H1 (cell line): ENCODE measurements at regions of chrX and their contacts with region 1.

Region 1: GRCh38 chrX:14029425-14030173 is at the start of gene GEMIN8:
- DNase-seq: peak; percentile 51 to 85
- H3K4me3 ChIP-seq: peak within 1 kb of the TSS; percentile 57 to 70 (median 66)
- H3K27ac ChIP-seq: peak within 1 kb of the TSS; percentile 83
- H3K4me1 ChIP-seq: peaks cover 0 to 8% (median 6%) of the 10 kb centered on the region in 4 experiments; a peak in 4 of 7 replicates
- H3K27me3 ChIP-seq: no peaks in the 10 kb centered on the region
- CTCF ChIP-seq: no peak
- EP300 ChIP-seq: no peak; a peak in 1 of 3 replicates
- POLR2A ChIP-seq: peak in 1 of 2 experiments; percentile 65; a peak in 2 of 3 replicates
- RAD21 ChIP-seq: no peak
- total RNA-seq, gene GEMIN8: 18.2 and 19.9 TPM in 2 replicates

Region 2: DNA sequence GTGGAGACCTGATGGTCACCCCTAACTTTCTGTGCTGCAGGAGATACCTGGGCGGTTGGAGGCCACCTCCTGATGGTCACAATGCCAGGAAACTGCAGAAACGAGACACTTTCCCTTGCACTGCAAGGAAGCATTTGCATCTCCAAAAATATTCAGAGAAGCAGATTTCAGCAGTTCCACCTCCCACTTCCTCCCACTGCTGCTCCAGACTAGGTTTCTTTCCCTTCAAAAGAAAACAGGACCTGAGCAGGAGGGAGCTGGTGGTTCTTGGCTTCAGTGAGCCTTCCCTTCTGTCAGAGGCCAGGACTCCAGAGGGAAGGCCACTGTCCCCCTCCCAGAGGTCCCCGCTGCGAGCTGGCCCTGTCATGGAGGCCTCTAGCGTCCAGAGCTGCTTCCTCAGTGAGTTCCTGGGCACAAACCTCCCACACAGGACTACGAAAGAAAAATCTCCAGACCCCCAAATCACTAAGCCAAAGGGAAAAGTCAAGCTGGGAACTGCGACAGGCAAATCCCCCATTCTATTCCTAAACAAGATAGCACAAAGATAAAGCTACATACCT is 248.7 kb before region 1 on chrX:
- CTCF ChIA-PET with region 1: interaction called, 4 read pairs
- POLR2A ChIA-PET with region 1: interaction called, 10 read pairs
- DNase-seq: no peak
- H3K4me3 ChIP-seq: no peak overlapping the region
- H3K27ac ChIP-seq: no peak overlapping the region
- H3K4me1 ChIP-seq: no peaks in the 10 kb centered on the region; a peak in 1 of 7 replicates
- H3K27me3 ChIP-seq: no peaks in the 10 kb centered on the region
- CTCF ChIP-seq: no peak
- EP300 ChIP-seq: no peak
- POLR2A ChIP-seq: no peak
- RAD21 ChIP-seq: no peak

Region 3: DNA sequence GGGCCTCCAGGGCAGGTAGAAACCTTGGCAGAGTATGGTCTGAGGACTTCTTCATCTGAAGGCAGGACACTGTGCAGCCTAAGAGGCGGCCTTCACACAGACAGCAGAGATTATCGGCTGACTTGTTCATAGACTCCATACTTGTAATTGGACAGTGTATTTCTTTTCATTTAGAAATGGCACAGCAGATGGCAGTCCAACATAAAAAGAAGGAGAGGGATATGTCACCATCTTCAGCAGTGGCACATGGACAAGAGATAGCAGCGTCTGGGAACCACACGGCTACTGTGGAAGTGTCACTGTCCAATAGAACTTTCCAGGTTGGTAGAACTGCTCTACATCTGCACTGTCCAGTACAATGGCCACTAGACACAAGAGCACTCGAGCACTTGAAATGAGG is 21.8 kb after region 1 on chrX:
- CTCF ChIA-PET with region 1: no interaction called
- POLR2A ChIA-PET with region 1: no interaction called
- DNase-seq: no peak
- H3K4me3 ChIP-seq: no peak overlapping the region
- H3K27ac ChIP-seq: no peak overlapping the region
- H3K4me1 ChIP-seq: no peaks in the 10 kb centered on the region
- H3K27me3 ChIP-seq: no peaks in the 10 kb centered on the region
- CTCF ChIP-seq: no peak
- EP300 ChIP-seq: no peak
- POLR2A ChIP-seq: no peak
- RAD21 ChIP-seq: no peak

Region 4: GRCh38 chrX:14235004-14235403 is 205.4 kb after region 1 on chrX:
- CTCF ChIA-PET with region 1: no interaction called
- POLR2A ChIA-PET with region 1: no interaction called
- DNase-seq: no peak
- H3K4me3 ChIP-seq: no peak overlapping the region
- H3K27ac ChIP-seq: no peak overlapping the region
- H3K4me1 ChIP-seq: no peaks in the 10 kb centered on the region
- H3K27me3 ChIP-seq: no peaks in the 10 kb centered on the region
- CTCF ChIP-seq: no peak
- EP300 ChIP-seq: no peak
- POLR2A ChIP-seq: no peak
- RAD21 ChIP-seq: no peak